IMR-90 (cell line): ENCODE measurements at regions of chr12 and their contacts with region 1.

Region 1: GRCh38 chr12:71415336-71416231 is 24.0 kb upstream of the LGR5 start:
- DNase-seq: peak; percentile 59
- ATAC-seq: peak; percentile 83
- H3K4me3 ChIP-seq: no peak overlapping the region
- H3K27ac ChIP-seq: no peak overlapping the region
- H3K4me1 ChIP-seq: no peaks in the 10 kb centered on the region
- H3K27me3 ChIP-seq: no peaks in the 10 kb centered on the region
- CTCF ChIP-seq: peak; percentile 76
- POLR2A ChIP-seq: no peak
- RAD21 ChIP-seq: peak; percentile 77

Region 2: DNA sequence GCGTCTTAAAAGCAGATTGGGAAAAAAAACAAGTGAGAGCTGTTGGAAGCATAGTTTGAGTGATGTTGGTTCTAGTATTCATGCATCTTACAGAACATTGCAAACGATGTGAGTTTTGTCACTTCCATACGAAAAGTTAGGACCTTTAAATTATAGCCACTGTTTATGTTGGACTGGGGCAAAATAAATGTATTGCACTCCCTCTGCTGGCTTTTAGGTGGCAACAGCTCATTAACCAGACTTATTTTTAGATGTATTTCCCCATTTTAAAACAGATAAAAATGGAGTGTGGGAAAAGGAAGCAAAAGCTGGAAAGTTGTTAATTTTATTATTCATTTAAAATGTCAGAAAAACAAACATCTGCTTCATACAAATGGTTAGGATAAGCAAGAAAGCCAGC is 135.9 kb after region 1 on chr12:
- CTCF ChIA-PET with region 1: interaction called, 17 read pairs
- POLR2A ChIA-PET with region 1: no interaction called
- dilution Hi-C with region 1: no loop called
- in situ Hi-C with region 1: no loop called
- intact Hi-C with region 1: loop called (anchors 1 kb)
- DNase-seq: peak; percentile 15
- ATAC-seq: no peak; the same call in 1 of the 2 replicates
- H3K4me3 ChIP-seq: no peak overlapping the region
- H3K27ac ChIP-seq: no peak overlapping the region
- H3K4me1 ChIP-seq: no peaks in the 10 kb centered on the region
- H3K27me3 ChIP-seq: no peaks in the 10 kb centered on the region
- CTCF ChIP-seq: peak; percentile 53
- POLR2A ChIP-seq: no peak
- RAD21 ChIP-seq: peak; percentile 47

Region 3: DNA sequence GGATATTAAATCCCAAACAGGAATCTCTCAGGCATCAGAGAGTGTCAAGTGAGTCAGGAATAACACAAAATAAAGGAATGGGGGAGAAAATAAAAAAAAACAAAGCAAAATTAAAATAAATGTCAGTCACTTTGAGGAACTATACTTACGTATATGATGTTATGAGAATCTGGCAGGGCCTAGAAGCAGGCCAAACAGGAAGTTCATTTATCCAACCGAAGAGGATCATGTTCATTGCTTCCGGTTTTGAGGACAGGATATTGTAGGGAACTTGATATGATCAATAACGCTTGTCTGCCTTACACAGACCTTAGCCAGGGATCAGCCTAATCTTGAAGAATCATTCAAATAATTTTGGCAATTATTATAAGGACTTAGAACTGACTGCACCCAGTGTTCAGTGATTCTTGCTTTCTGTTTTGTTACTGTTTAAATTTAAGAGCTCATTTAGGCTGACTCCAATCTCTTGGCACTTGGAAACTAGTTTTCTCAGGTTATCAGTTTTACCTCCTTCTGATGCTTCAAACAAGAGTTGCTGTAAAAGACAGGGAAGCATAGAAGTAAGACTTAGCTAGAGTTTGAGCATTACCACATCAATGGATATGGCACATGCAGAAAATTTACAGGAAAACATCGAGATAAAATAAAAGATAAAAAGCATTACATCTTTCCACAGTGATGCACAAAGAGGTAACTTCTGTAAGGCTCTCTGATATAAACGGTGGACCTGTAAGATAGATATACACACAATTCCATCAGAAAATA is 194.6 kb after region 1 on chr12:
- CTCF ChIA-PET with region 1: no interaction called
- POLR2A ChIA-PET with region 1: no interaction called
- dilution Hi-C with region 1: no loop called
- in situ Hi-C with region 1: no loop called
- intact Hi-C with region 1: loop called (anchors 5 kb)
- DNase-seq: no peak
- ATAC-seq: no peak
- H3K4me3 ChIP-seq: no peak overlapping the region
- H3K27ac ChIP-seq: no peak overlapping the region
- H3K4me1 ChIP-seq: no peaks in the 10 kb centered on the region
- H3K27me3 ChIP-seq: no peaks in the 10 kb centered on the region
- CTCF ChIP-seq: no peak
- POLR2A ChIP-seq: no peak
- RAD21 ChIP-seq: no peak

Region 4: GRCh38 chr12:71636704-71637115 is 221.1 kb after region 1 on chr12:
- CTCF ChIA-PET with region 1: interaction called, 3 read pairs
- POLR2A ChIA-PET with region 1: no interaction called
- dilution Hi-C with region 1: no loop called
- in situ Hi-C with region 1: no loop called
- intact Hi-C with region 1: loop called (anchors 1 kb)
- DNase-seq: peak; percentile 72
- ATAC-seq: peak; percentile 54; the same call in 1 of the 2 replicates
- H3K4me3 ChIP-seq: no peak overlapping the region
- H3K27ac ChIP-seq: no peak overlapping the region
- H3K4me1 ChIP-seq: no peaks in the 10 kb centered on the region
- H3K27me3 ChIP-seq: no peaks in the 10 kb centered on the region
- CTCF ChIP-seq: peak; percentile 57
- POLR2A ChIP-seq: no peak
- RAD21 ChIP-seq: peak; percentile 38

Region 5: DNA sequence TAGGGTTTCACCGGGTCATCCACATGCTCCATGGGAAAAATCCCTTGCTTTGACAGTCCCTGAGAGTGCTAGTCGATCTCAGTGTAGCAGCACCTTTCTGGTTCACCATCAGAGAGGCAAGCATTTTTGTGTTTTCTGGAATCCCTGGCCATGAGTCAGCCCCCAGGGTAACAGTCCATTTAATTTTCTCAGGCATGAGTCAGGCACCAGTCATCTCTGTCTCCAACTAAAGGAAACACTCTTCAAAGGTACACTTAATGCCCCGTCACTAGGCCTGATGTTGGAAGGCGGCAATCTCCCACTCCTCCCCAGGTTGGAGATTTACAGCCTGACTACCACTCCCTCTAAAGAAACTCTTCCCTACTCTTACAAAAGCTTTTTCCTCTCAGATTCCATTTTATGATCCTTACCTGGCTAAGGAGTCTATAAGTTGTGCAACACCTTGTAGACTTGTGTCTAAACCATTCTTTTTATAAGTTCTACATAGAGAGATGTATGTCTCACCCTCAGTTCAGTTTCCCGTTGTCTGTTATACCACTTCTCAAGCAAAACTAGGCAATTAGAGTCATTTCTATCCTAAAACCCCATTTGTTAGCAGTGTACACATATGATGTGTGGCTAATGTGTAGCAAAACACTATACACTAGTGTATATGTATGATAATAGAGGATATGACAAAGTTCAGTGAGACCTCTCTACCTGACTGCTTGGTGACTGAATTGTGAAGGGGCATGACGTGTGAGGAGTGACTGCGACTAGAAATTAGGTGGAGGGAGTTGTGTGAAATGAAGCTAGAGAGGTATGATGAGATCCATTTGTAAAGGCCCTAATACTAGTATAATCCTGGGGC is 294.9 kb after region 1 on chr12:
- CTCF ChIA-PET with region 1: no interaction called
- POLR2A ChIA-PET with region 1: no interaction called
- dilution Hi-C with region 1: loop called (anchors 25 kb)
- in situ Hi-C with region 1: no loop called
- intact Hi-C with region 1: no loop called
- DNase-seq: peak; percentile 91
- ATAC-seq: peak; percentile 97
- H3K4me3 ChIP-seq: no peak overlapping the region
- H3K27ac ChIP-seq: no peak overlapping the region
- H3K4me1 ChIP-seq: peaks cover 2% of the 10 kb centered on the region; the same call in 1 of the 2 replicates
- H3K27me3 ChIP-seq: no peaks in the 10 kb centered on the region
- CTCF ChIP-seq: no peak
- POLR2A ChIP-seq: no peak
- RAD21 ChIP-seq: no peak

Region 6: DNA sequence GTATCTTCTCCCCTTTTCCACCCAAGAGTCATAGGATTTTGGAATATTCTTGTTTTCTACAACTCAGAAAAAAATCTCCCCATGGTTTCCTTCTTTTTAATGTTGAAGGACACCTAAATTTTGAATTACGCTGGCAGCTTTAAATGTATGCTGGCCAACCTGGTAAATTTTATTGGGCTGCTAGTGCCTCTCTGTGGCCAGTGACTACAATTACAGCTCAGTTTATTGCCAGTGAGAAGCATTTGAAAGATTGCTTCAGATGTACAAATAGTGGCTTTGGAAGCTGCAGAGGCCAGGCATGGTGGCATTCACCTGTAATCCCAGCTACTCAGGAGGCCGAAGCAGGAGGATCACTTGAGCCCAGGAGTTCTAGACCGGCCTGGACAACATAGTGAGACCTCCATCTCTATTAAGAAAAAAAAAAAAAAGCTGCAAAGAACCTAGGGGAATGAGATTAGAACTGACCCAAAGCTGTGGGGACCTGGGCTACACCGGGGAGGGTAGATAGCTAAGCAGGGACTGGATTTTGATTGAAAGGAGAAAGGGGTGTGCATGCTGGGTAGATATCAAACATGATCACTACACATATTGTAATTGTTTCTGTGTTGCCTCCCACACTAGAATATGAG is 331.5 kb after region 1 on chr12:
- CTCF ChIA-PET with region 1: interaction called, 7 read pairs
- POLR2A ChIA-PET with region 1: no interaction called
- dilution Hi-C with region 1: no loop called
- in situ Hi-C with region 1: loop called (anchors 10 kb)
- intact Hi-C with region 1: loop called (anchors 1 kb)
- DNase-seq: peak; percentile 73
- ATAC-seq: peak; percentile 97
- H3K4me3 ChIP-seq: no peak overlapping the region
- H3K27ac ChIP-seq: no peak overlapping the region
- H3K4me1 ChIP-seq: no peaks in the 10 kb centered on the region
- H3K27me3 ChIP-seq: peaks cover 24% of the 10 kb centered on the region
- CTCF ChIP-seq: peak; percentile 88
- POLR2A ChIP-seq: no peak
- RAD21 ChIP-seq: peak; percentile 88